ENCODE measurements at regions of chr4 and their contacts with region 1.

Region 1: DNA sequence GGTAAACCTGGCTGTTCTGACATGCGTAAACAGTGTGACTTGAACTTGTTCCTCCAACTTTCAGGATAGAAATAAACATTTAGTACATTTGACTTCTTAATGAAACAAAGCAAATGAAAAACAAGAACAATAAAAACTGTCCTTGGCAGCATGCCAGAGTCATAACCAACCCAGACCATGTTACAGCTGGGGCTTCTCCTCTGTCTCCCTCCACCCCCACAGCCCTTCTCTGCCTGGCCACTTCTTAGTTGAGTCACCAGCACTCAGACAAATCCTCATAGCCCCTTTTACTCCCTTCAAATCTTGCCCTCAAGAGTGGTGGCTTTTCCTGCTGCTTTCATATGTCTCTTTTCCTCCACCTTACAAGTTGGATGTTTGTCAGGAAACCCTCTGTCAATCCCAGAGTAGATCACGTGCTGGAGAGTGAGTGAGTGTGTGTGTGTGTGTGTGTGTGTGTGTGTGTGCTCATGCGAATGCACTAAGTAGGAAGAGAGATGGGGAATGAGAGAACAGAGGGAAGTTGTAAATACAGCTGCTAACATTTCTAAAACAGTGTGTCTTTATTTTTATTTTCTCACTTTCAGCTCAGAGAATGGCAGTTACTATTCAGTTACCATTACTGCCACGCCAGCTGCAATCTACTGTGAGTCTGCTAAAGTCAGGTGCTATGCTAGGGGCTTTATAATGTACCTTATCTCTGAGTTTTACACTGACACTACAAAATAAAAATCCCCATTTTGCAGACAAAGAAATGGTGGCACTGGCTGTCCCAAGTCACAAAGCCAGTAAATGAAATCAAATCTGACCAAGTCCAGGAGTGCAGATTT is 15.0 kb downstream of the SCARB2 start:
- H3K4me3 Mint-ChIP-seq: no peak overlapping the region
- H3K27ac Mint-ChIP-seq: peak overlapping the region; percentile 80
- H3K4me1 Mint-ChIP-seq: peaks cover 63% of the 10 kb centered on the region
- H3K27me3 Mint-ChIP-seq: no peaks in the 10 kb centered on the region

Region 2: GRCh38 chr4:76213415-76214176 is 15.0 kb after region 1 on chr4 and contains the start of gene SCARB2:
- intact Hi-C with region 1: loop called (anchors 2 kb)
- H3K4me3 Mint-ChIP-seq: peak within 1 kb of the TSS; percentile 93
- H3K27ac Mint-ChIP-seq: peak within 1 kb of the TSS; percentile 83
- H3K4me1 Mint-ChIP-seq: peaks cover 83% of the 10 kb centered on the region
- H3K27me3 Mint-ChIP-seq: no peaks in the 10 kb centered on the region

Measured in dendritic cell treated with granulocyte-macrophage colony-stimulating factor and Interleukin-4, amounts not matched to agents 40 ng/mL and 50 ng/mL, for 4 days (primary cell).